HCT116 (cell line): ENCODE measurements at regions of chr6 and their contacts with region 1.

Region 1: DNA sequence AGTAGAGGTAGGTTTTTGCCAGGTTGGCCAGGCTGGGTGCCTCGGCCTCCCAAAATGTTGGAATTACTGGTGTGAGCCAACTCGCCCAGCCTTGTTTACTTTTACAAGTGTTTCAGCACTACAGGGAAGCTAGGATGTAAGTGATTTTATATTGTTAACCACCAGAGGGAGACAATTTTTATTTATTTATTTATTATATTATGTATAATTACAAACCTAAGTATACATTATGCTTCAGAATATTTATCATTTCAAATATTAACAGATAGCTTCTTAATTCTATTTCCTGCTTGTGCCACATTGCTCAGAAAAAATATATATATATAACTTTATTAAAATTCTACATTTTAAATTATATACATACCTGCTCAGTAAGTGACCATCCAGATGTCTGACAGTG is 9.8 kb downstream of the MMUT start:
- DNase-seq: no peak
- ATAC-seq: no peak; the same call in 1 of the 2 replicates
- H3K4me3 ChIP-seq: no peak overlapping the region
- H3K27ac ChIP-seq: no peak overlapping the region
- H3K4me1 ChIP-seq: no peaks in the 10 kb centered on the region
- H3K27me3 ChIP-seq: no peaks in the 10 kb centered on the region
- CTCF ChIP-seq: peak; percentile 6 to 14 (median 14); a peak in 2 of 6 replicates
- POLR2A ChIP-seq: no peak
- RAD21 ChIP-seq: no peak

Region 2: GRCh38 chr6:49606696-49607390 is 153.6 kb after region 1 on chr6:
- CTCF ChIA-PET with region 1: interaction called, 10 read pairs
- POLR2A ChIA-PET with region 1: no interaction called
- RAD21 ChIA-PET with region 1: interaction called in 1 of 2 experiments, 3 read pairs
- intact Hi-C with region 1: loop called (anchors 1 kb)
- DNase-seq: peak; percentile 93
- ATAC-seq: peak; percentile 95
- H3K4me3 ChIP-seq: peak overlapping the region in 1 of 2 experiments; percentile 43; a peak in 2 of 4 replicates
- H3K27ac ChIP-seq: no peak overlapping the region
- H3K4me1 ChIP-seq: peaks cover 0 to 12% of the 10 kb centered on the region in 2 experiments; a peak in 3 of 4 replicates
- H3K27me3 ChIP-seq: no peaks in the 10 kb centered on the region
- CTCF ChIP-seq: peak; percentile 79 to 97 (median 86)
- POLR2A ChIP-seq: no peak
- RAD21 ChIP-seq: peak; percentile 92

Region 3: DNA sequence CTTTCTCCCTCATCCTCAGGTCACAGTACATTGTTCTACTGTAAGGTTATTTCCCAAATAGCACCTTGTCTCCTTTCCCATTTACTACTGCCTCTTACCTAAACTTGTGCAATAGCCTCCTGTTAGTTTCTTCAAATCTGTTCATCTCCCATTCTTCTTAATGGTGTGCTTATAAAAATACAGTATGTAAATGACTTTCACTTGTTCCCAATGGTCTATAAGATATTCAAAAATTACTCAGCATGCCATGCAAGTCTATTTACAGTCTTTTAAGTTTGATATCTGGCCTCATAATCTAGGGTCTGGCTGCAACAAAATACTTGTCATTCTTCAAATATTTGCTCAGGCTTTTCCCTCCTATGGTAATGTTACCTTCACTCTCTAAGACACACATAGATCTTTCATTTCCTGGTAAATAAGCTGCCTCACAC is 214.9 kb after region 1 on chr6:
- CTCF ChIA-PET with region 1: no interaction called
- POLR2A ChIA-PET with region 1: no interaction called
- RAD21 ChIA-PET with region 1: no interaction called
- intact Hi-C with region 1: no loop called
- DNase-seq: no peak
- ATAC-seq: no peak
- H3K4me3 ChIP-seq: no peak overlapping the region
- H3K27ac ChIP-seq: no peak overlapping the region
- H3K4me1 ChIP-seq: no peaks in the 10 kb centered on the region
- H3K27me3 ChIP-seq: no peaks in the 10 kb centered on the region
- CTCF ChIP-seq: no peak
- POLR2A ChIP-seq: no peak
- RAD21 ChIP-seq: no peak

Region 4: DNA sequence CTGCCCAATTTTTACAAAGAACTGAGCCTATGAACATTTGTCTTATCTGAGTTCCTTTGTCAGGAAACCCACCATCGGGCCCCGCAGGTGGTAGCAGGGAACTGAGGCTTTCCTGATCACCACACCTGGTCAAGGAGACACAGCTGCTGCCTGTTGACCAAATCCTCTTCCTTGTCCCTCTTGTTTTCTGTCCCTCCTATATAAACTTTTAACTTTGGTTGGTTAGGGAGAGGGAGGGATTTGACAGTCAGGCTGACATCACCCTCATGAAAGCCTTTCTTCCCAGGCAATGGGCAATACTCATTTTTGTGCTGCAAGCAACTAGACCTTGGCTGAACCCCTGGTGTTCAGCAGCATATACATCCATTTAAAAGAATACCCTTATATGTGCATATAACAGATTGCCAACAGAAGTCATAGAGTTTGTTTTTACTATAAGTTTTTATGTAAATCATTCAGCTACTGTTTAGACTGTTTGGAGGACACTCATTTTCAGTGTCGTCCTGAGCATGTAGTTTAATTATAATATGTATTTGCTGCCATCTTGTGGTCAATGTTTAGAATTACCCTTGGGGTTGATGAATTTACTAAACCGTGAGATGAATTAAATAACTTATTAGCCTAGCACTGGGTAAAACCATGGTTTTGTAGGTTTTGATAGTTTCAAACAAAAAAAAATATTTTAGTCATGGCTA is 396.1 kb after region 1 on chr6:
- CTCF ChIA-PET with region 1: interaction called, 5 read pairs
- POLR2A ChIA-PET with region 1: no interaction called
- RAD21 ChIA-PET with region 1: interaction called in 1 of 2 experiments, 3 read pairs
- intact Hi-C with region 1: loop called (anchors 1 kb)
- DNase-seq: peak; percentile 56
- ATAC-seq: peak; percentile 88
- H3K4me3 ChIP-seq: no peak overlapping the region
- H3K27ac ChIP-seq: no peak overlapping the region
- H3K4me1 ChIP-seq: no peaks in the 10 kb centered on the region
- H3K27me3 ChIP-seq: no peaks in the 10 kb centered on the region
- CTCF ChIP-seq: peak; percentile 33 to 73 (median 65); a peak in 4 of 6 replicates
- POLR2A ChIP-seq: no peak
- RAD21 ChIP-seq: peak; percentile 82